ENCODE measurements at regions of chr10 and their contacts with region 1.

Region 1: DNA sequence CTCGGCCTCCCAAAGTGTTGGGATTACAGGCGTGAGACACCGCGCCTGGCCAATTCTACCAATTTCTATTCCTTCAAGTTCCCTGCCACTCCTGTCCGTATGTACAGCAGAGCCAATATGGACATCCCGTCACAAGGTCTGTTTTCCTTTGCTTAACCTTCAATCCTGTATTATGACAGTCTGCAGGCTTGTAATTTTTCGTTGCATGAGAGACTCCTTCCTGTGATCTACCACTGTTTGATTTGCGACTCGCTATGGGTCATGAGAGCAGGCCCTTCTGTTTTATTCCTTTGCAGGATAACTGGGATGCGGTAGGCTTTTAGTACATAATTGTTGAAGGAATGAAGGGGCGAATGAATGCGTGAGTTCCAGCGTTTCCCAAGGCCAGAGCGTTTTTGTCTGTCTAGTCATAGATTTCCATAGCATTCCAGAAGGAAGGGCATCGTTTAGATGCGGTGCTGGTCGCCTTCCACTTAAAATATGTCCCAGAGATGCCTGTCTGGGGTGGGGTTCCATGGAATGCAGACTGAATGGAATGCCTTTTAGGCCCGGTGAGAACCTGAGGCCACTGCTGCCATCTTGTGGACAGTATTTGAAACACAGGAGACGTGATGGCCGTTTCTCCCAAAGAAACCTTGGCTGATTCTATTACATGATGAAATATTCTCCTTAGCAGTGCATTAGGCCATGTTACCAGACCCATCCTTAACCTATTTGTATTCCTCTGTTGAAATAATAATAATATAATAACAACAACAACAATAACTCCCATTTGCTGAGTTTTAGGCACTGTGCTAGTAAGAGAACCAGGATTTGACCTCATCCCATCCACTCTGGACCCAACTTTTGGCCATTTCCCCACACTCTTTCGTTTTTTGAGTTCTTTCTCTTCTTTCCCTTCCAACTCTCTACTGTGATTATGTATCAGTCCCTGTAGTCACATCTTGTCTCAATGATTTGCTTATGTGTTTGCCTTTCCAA is 193.2 kb downstream of the MYOF start:
- DNase-seq: peak; percentile 48 to 70 (median 62)
- ATAC-seq: peak; percentile 95 to 99 (median 98)
- H3K4me3 ChIP-seq: no peak overlapping the region
- H3K27ac ChIP-seq: no peak overlapping the region
- H3K4me1 ChIP-seq: no peaks in the 10 kb centered on the region
- H3K27me3 ChIP-seq: no peaks in the 10 kb centered on the region
- CTCF ChIP-seq: peak; percentile 85 to 91 (median 88)
- POLR2A ChIP-seq: no peak

Region 2: GRCh38 chr10:92822060-92822634 is 466.8 kb before region 1 on chr10:
- intact Hi-C with region 1: no loop called
- DNase-seq: no peak
- ATAC-seq: peak; percentile 49 to 78 (median 68)
- H3K4me3 ChIP-seq: no peak overlapping the region
- H3K27ac ChIP-seq: peak overlapping the region; percentile 1 to 58 (median 16)
- H3K4me1 ChIP-seq: no peaks in the 10 kb centered on the region
- H3K27me3 ChIP-seq: no peaks in the 10 kb centered on the region
- CTCF ChIP-seq: no peak
- POLR2A ChIP-seq: no peak

Region 3: DNA sequence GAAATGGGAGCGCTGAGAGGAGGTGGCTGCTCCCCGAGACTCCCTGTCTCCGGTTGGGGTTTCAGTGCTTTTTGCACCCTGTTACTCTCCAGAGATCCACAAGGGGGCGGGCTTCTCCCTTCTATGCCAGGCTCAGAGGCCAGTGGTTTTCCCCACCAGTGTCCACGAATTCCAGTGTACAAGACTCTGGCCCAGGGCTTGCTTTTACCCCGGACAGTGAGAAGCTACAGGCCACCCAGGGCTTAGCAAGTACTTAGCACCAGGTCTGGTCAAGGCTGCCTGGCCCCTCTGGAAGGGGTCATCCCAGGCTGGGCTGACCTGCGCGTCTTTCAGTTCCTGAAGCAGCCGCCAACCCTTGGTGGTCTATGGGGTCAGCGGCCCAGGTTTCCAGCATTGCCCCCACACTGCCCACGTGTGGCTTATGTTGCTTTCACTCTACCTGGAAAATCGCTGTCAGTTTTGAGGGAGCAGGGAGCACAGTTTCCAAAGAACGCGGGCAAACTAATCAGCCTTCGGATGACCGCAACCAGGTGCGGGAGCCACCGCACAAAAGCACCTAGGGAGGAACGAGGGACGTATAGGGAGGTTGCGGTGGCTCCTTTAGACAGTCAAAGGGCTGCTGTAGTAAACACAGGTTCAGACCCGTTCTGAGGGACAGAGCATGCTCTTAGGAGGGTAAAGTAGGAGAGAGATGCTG is 208.4 kb before region 1 on chr10:
- intact Hi-C with region 1: loop called in 1 of 2 experiments (anchors 10 kb)
- DNase-seq: peak; percentile 48 to 75 (median 67)
- ATAC-seq: peak; percentile 71 to 74 (median 72)
- H3K4me3 ChIP-seq: no peak overlapping the region
- H3K27ac ChIP-seq: peak overlapping the region in 1 of 3 donors; percentile 41
- H3K4me1 ChIP-seq: peaks cover 0 to 47% (median 14%) of the 10 kb centered on the region in 4 donors
- H3K27me3 ChIP-seq: no peaks in the 10 kb centered on the region
- CTCF ChIP-seq: peak; percentile 80 to 88 (median 81)
- POLR2A ChIP-seq: no peak

Region 4: GRCh38 chr10:93110472-93111146 is 178.3 kb before region 1 on chr10:
- intact Hi-C with region 1: loop called (anchors 5 to 10 kb)
- DNase-seq: no peak
- ATAC-seq: no peak
- H3K4me3 ChIP-seq: no peak overlapping the region
- H3K27ac ChIP-seq: no peak overlapping the region
- H3K4me1 ChIP-seq: peaks cover 0 to 20% (median 1%) of the 10 kb centered on the region in 4 donors
- H3K27me3 ChIP-seq: no peaks in the 10 kb centered on the region
- CTCF ChIP-seq: no peak
- POLR2A ChIP-seq: no peak

Region 5: GRCh38 chr10:93115661-93116383 is 173.1 kb before region 1 on chr10:
- intact Hi-C with region 1: loop called (anchors 5 to 10 kb)
- DNase-seq: peak; percentile 58 to 84 (median 67)
- ATAC-seq: peak; percentile 90 to 94 (median 92)
- H3K4me3 ChIP-seq: no peak overlapping the region
- H3K27ac ChIP-seq: no peak overlapping the region
- H3K4me1 ChIP-seq: peaks cover 0 to 7% (median 0%) of the 10 kb centered on the region in 4 donors
- H3K27me3 ChIP-seq: no peaks in the 10 kb centered on the region
- CTCF ChIP-seq: peak; percentile 38 to 58 (median 48)
- POLR2A ChIP-seq: no peak

Measured in right lobe of liver (tissue), 6 donors.